Heart left ventricle (tissue), 16 donors: ENCODE measurements at regions of chr17 and their contacts with region 1.

Region 1: GRCh38 chr17:60720763-60721531 is 43.3 kb downstream of the BCAS3 start:
- DNase-seq: peak in 2 of 5 donors; percentile 18 to 27
- ATAC-seq: peak in 2 of 4 donors; percentile 41 to 62
- H3K4me3 ChIP-seq: no peak overlapping the region
- H3K27ac ChIP-seq: no peak overlapping the region
- H3K4me1 ChIP-seq: peaks cover 0 to 3% (median 0%) of the 10 kb centered on the region in 12 donors
- H3K27me3 ChIP-seq: no peaks in the 10 kb centered on the region
- CTCF ChIP-seq: peak; percentile 82 to 93 (median 88)
- POLR2A ChIP-seq: no peak

Region 2: DNA sequence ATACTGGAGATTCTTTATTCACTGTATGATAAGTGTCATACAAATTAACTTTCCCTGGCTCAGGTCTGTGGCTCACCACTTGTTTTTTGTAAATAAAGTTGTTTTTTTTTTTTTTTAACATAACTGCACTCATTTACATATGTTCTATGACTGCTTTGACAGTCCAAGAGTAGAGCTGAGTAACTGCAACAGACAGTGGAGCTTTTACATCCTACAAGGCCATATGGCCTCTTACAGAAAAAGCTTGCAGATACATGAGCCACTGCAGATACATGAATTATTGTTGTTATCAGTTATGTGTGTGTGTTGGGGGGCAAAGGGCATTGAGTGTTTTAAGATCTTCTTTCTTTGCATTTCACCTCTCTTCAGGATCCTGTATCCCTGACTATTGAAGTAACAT is 268.4 kb after region 1 on chr17:
- intact Hi-C with region 1: loop called in 1 of 10 experiments (anchors 10 kb)
- DNase-seq: no peak
- ATAC-seq: no peak
- H3K4me3 ChIP-seq: no peak overlapping the region
- H3K27ac ChIP-seq: no peak overlapping the region
- H3K4me1 ChIP-seq: peaks cover 0 to 5% (median 0%) of the 10 kb centered on the region in 12 donors
- H3K27me3 ChIP-seq: no peaks in the 10 kb centered on the region
- CTCF ChIP-seq: no peak
- POLR2A ChIP-seq: no peak

Region 3: DNA sequence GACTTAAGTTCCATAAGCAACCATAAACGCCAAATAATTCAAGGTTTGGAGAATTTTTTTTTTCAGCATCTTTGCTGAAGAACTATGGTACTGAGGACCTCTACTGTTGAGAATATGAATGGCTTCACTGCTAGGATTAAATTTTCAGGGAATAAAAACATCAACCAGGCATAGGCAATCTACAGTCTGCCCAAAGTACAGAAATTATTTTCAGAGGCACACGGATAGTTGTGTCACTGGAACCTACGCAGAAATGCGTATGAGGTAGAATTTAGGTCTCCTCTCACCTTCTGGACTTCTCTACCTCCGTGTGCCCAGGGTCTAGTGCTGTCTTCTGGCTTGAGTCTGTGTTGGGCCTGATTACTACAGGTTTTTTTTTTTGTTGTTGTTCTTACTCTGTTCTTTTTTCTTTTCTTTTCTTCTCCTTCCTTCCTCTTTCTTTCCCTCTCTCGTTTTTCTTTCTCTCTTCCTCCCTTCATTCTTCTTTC is 830.4 kb after region 1 on chr17:
- intact Hi-C with region 1: loop called in 5 of 10 experiments (anchors 5 to 10 kb)
- DNase-seq: no peak
- ATAC-seq: no peak
- H3K4me3 ChIP-seq: no peak overlapping the region
- H3K27ac ChIP-seq: no peak overlapping the region
- H3K4me1 ChIP-seq: no peaks in the 10 kb centered on the region
- H3K27me3 ChIP-seq: peaks cover 0 to 30% (median 15%) of the 10 kb centered on the region in 9 donors
- CTCF ChIP-seq: peak; percentile 34 to 73 (median 54)
- POLR2A ChIP-seq: no peak

Region 4: DNA sequence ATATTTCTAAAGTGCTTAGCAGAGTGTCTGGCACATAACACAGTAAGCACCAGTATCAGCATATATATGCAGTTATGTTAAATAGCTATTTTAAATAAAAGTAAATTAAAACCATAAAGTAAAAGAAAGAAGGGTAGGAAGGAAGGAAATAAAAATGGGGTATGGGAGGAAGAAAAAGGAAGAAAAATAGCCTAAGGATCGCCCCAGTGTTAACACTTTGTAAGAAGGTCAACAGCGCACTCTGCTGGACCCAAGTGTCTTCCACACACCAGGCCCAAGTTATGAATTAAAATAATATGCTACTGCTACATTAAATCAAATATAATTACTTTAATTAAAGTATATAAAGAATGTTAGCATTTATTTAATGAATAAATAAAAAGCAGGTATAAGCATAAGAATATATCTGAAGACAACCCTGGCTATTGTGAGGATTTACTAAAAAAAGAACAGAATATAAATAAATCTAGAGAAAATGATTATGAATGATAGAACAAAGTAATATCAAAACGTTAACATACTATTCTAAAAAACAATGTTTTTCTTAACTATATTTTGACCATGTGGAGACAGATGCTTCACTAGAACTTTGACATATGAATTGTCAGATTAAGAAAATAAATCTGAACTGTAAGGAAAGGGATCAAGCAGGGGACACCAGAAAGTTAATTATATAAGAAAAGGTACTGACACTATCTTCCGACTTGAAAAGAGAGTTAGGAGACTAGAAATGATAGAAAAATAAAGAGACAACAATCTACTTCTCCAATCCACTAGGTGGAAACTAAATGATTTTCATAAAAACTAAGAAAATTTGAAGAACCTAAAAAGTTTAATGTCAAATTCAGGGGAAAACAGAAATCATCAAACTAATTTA is 1116.5 kb after region 1 on chr17:
- intact Hi-C with region 1: loop called in 4 of 10 experiments (anchors 2 to 10 kb)
- DNase-seq: peak in 4 of 5 donors; percentile 15 to 43 (median 36)
- ATAC-seq: peak in 3 of 4 donors; percentile 44 to 57 (median 50)
- H3K4me3 ChIP-seq: no peak overlapping the region
- H3K27ac ChIP-seq: no peak overlapping the region
- H3K4me1 ChIP-seq: no peaks in the 10 kb centered on the region
- H3K27me3 ChIP-seq: no peaks in the 10 kb centered on the region
- CTCF ChIP-seq: peak; percentile 37 to 77 (median 58)
- POLR2A ChIP-seq: no peak